ENCODE measurements at regions of chr15 and their contacts with region 1.

Region 1: DNA sequence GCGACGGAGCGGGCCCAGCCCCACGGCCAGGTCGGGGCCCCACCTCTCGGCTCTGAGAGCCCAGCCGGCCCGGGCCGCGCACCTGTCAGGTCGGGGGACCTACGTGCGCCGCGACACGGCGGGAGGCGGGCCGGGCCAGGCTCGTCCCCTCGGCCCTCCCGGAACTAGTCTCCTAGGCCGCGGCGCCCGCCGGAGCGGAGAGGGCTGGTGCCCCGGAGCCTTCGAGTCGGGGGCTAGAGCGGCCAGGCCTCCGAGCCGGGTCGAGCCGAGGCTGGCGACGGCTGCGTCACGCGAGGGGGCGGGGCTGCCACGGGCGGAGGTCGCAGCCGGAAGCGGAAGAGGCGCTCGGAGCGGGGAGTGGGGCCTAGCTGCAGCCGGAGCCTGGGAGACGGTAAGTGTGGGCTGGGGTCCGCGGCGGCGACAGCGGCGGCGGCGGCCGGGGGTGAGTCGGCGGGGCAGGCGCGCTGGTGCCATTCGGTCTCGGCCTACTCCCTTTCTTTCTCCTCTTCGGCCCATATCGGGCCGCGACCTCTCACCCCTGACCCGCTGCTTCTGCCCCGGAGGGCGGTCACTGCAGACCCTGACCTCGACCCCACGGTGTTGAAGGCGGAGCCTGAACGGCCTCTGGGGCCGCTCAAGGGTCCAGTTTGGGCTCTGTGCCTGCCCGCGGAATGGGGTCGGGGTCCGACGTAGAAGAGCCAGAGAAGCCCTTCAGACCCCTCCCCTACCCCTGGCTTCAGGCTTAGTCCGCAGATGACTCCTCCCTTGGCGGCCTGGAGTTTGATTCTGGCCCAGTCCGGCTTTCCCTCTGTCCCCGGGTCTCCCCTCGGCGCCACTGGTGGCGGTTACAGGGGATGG is at the start of gene CLK3:
- DNase-seq: peak; percentile 97
- H3K4me3 Mint-ChIP-seq: peak within 1 kb of the TSS; percentile 93
- H3K27ac Mint-ChIP-seq: peak within 1 kb of the TSS; percentile 99
- H3K4me1 Mint-ChIP-seq: peaks cover 49% of the 10 kb centered on the region
- H3K27me3 Mint-ChIP-seq: peaks cover 25% of the 10 kb centered on the region

Region 2: DNA sequence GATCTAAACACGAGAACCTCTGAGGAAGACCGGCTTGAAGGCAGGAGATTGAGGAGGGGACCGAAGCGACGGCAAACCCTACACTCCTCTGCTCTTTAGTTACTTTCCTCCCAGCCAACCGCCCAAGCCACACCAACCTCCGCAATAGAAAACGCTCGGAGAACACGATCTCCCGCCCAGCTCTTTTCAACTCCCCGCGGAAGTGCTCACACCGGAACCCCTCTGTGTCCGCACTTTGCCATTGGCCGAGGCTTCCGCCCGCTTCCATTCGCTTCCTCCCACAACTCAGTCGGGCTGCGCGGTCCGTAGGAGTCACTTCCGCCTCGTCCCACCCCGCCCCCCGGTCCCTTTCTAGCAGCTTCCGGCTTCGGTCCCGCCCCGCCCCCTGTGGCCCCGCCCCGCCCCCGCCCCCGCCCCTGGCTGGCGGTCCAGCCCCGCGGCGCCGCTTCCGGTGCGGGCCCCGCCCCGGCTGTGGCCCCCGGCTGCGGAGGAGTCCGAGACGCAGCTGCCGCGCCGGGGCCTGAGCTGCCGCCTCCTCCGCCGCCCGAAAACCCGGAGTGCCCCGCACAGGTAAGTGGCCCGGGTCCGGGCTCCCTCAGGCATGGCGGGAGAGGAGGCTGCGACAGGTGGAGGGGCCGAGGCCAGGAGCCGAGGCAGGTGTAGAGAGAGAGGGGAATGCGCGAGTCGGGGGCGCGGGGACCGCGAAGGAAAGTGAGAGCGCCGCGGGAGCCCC is 74.8 kb before region 1 on chr15 and contains the start of gene ARID3B:
- CTCF ChIA-PET with region 1: interaction called, 11 read pairs
- DNase-seq: peak; percentile 98
- H3K4me3 Mint-ChIP-seq: peak within 1 kb of the TSS; percentile 93
- H3K27ac Mint-ChIP-seq: peak within 1 kb of the TSS; percentile 97
- H3K4me1 Mint-ChIP-seq: peaks cover 53% of the 10 kb centered on the region
- H3K27me3 Mint-ChIP-seq: no peaks in the 10 kb centered on the region